ENCODE measurements at regions of chr17 and their contacts with region 1.

Region 1: GRCh38 chr17:12673788-12674187 is 8.1 kb downstream of the MYOCD start:
- DNase-seq: no peak
- H3K4me3 Mint-ChIP-seq: no peak overlapping the region
- H3K27ac Mint-ChIP-seq: no peak overlapping the region
- H3K4me1 Mint-ChIP-seq: peaks cover 8% of the 10 kb centered on the region
- H3K27me3 Mint-ChIP-seq: no peaks in the 10 kb centered on the region
- CTCF ChIP-seq: no peak

Region 2: DNA sequence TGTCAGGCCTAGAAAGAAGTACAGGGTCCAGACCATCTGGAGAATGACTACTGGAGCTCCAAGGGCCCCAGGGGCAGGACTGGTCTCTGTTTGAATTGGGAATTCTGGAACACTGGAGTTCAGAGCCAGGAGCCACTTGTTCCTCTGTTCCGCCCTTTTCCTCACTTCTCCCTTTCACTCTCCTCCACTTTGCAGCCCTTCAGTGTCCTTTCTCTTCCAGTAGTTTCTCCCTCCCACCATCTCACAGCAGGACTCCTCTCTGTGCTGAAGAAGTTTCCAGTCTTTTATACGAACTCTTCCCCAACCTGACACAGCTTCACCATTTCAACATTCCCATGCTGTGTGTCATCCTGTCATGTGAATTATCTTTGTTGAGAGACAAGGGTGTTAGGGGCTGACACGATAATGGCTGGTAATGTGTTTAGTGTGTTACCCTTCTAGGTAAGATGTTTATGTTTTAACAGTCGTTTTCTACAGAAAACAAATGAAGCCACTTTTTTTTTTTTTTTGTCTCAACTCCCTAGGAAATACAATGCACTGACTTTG is 188.4 kb before region 1 on chr17:
- CTCF ChIA-PET with region 1: no interaction called
- intact Hi-C with region 1: no loop called
- DNase-seq: no peak
- H3K4me3 Mint-ChIP-seq: no peak overlapping the region
- H3K27ac Mint-ChIP-seq: no peak overlapping the region
- H3K4me1 Mint-ChIP-seq: no peaks in the 10 kb centered on the region
- H3K27me3 Mint-ChIP-seq: peaks cover 7% of the 10 kb centered on the region
- CTCF ChIP-seq: no peak

Region 3: DNA sequence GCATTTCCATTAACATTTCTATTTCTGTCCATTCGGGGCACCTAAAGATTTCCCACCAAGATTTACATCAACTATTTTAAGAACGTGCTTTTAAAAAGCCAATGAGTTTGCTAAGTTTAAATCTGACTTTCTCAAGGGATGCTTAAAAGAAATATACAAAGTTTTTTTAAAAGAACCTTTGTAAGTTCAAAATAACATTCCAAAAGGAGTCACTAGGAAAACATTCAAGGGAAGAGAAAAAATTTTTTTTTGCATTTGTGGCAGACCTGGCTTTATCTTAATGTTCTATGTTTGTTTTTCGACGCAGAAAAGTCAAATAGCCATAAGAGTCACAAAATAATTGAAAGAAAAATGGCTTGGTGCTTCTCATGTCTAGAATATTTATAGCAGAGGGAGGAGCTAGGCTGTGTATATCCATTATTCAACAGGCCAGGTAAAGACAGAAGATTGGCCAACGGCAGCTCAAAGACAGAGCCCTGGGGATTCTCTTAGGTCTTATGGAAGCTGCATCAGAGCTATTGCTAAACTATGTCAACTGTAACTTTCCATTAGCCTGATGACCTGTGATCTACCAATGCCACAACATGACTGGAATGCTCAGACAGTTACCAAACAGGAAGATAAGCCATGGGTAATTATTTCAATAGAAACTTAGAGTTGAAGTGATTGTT is 45.9 kb before region 1 on chr17:
- CTCF ChIA-PET with region 1: no interaction called
- intact Hi-C with region 1: no loop called
- DNase-seq: no peak
- H3K4me3 Mint-ChIP-seq: no peak overlapping the region
- H3K27ac Mint-ChIP-seq: peak overlapping the region; percentile 55
- H3K4me1 Mint-ChIP-seq: peaks cover 27% of the 10 kb centered on the region
- H3K27me3 Mint-ChIP-seq: no peaks in the 10 kb centered on the region
- CTCF ChIP-seq: no peak

Region 4: DNA sequence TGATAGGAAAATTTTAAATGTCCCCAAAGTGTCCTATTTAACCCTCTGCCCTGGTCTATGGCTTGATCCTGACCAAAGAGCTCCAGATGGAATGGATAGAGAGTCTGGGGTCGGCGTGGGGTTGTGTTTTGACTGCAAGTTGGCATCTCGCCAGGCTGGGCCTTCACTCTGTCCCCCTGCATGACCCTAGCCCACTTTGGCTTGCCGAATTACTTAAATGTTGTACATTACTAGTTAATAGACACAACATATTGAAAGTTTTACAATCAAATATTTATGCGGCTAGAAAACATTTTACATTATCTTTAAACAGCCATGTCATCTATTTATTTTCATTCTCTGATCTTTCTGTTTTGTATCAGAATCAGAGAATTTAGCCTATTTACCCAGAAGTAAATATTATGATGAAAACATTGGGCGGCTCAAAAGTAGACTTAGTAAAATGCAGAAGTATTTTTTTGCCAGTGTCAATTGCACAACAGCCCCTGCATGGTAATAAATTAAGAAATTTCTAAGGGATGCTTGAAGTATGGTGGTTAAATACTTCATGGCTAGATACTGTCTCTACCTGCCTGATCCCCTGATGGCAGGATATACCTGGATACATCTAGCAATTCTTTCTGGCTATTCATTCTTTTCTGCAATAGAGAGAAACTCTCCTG is 26.9 kb before region 1 on chr17:
- CTCF ChIA-PET with region 1: no interaction called
- intact Hi-C with region 1: no loop called
- DNase-seq: no peak
- H3K4me3 Mint-ChIP-seq: no peak overlapping the region
- H3K27ac Mint-ChIP-seq: no peak overlapping the region
- H3K4me1 Mint-ChIP-seq: no peaks in the 10 kb centered on the region
- H3K27me3 Mint-ChIP-seq: peaks cover 23% of the 10 kb centered on the region
- CTCF ChIP-seq: no peak

Region 5: DNA sequence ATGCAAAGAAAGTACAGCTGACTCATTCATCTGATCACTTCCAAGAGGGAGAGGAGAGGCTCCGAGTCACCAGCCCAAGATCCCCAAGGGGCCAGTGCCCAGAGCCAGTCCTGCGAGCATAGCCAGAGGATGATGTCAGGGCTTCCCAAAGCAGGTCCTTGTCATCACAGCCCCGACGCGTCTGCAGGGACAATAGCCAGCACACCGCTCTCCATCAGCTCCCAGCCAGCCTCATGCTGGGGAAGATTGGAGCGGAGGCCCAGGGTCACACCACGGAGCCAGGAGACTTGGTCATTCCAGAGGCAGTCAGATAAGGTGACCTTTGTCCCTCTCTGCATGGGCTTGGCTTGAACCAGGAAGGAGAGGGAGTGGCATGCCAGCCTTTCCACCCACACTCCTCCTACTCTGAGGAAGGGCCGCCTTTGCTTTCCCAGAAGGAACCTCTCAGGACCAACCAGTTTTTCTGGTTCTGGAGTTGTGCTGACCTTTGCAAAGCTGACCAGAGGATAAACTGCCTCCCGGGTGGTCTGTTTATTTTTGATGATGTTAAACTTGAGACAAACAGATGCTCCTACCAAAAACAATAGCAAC is 57.2 kb after region 1 on chr17:
- CTCF ChIA-PET with region 1: no interaction called
- intact Hi-C with region 1: loop called (anchors 1 kb)
- DNase-seq: peak; percentile 81
- H3K4me3 Mint-ChIP-seq: peak overlapping the region; percentile 45
- H3K27ac Mint-ChIP-seq: peak overlapping the region; percentile 92
- H3K4me1 Mint-ChIP-seq: peaks cover 29% of the 10 kb centered on the region
- H3K27me3 Mint-ChIP-seq: no peaks in the 10 kb centered on the region
- CTCF ChIP-seq: no peak

Region 6: GRCh38 chr17:12744298-12744697 is 70.5 kb after region 1 on chr17:
- CTCF ChIA-PET with region 1: interaction called, 3 read pairs
- intact Hi-C with region 1: loop called (anchors 2 kb)
- DNase-seq: peak; percentile 39
- H3K4me3 Mint-ChIP-seq: no peak overlapping the region
- H3K27ac Mint-ChIP-seq: peak overlapping the region; percentile 39
- H3K4me1 Mint-ChIP-seq: peaks cover 48% of the 10 kb centered on the region
- H3K27me3 Mint-ChIP-seq: no peaks in the 10 kb centered on the region
- CTCF ChIP-seq: no peak

Region 7: DNA sequence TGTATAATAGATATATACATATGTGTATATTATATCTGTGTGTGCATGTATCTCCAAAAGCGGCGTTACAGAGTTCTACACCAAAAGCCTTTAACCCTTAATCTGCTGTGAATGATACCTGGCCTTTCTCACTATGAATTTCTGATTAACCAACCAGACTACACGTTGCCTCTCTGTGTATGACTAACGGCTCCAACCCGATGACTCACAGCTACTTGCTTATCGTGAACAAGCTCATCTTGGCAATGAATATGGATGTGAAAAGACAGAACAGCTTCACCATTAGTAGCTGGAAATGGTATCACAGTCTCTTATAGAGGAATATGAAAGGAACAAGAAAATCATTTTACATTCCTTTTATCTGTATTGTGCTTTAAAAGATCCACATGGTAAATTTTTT is 91.8 kb after region 1 on chr17:
- CTCF ChIA-PET with region 1: no interaction called
- intact Hi-C with region 1: no loop called
- DNase-seq: peak; percentile 16
- H3K4me3 Mint-ChIP-seq: no peak overlapping the region
- H3K27ac Mint-ChIP-seq: no peak overlapping the region
- H3K4me1 Mint-ChIP-seq: no peaks in the 10 kb centered on the region
- H3K27me3 Mint-ChIP-seq: peaks cover 33% of the 10 kb centered on the region
- CTCF ChIP-seq: no peak